ENCODE measurements at regions of chr1 and their contacts with region 1.

Region 1: GRCh38 chr1:237386362-237387143 is 344.6 kb downstream of the RYR2 start:
- DNase-seq: peak; percentile 9
- H3K4me3 ChIP-seq: no peak overlapping the region
- H3K27ac ChIP-seq: no peak overlapping the region
- H3K4me1 ChIP-seq: no peaks in the 10 kb centered on the region
- H3K27me3 ChIP-seq: no peaks in the 10 kb centered on the region
- CTCF ChIP-seq: peak; percentile 24 to 25
- POLR2A ChIP-seq: no peak

Region 2: GRCh38 chr1:236868625-236869467 is 517.7 kb before region 1 on chr1:
- CTCF ChIA-PET with region 1: interaction called, 5 read pairs
- POLR2A ChIA-PET with region 1: no interaction called
- dilution Hi-C with region 1: no loop called
- intact Hi-C with region 1: loop called (anchors 1 kb)
- DNase-seq: peak; percentile 69
- H3K4me3 ChIP-seq: no peak overlapping the region
- H3K27ac ChIP-seq: no peak overlapping the region
- H3K4me1 ChIP-seq: no peaks in the 10 kb centered on the region
- H3K27me3 ChIP-seq: no peaks in the 10 kb centered on the region
- CTCF ChIP-seq: peak; percentile 85 to 97
- POLR2A ChIP-seq: no peak

Region 3: GRCh38 chr1:236904874-236905741 is 481.4 kb before region 1 on chr1:
- CTCF ChIA-PET with region 1: no interaction called
- POLR2A ChIA-PET with region 1: no interaction called
- dilution Hi-C with region 1: no loop called
- intact Hi-C with region 1: loop called (anchors 10 kb)
- DNase-seq: peak; percentile 7
- H3K4me3 ChIP-seq: no peak overlapping the region
- H3K27ac ChIP-seq: no peak overlapping the region
- H3K4me1 ChIP-seq: no peaks in the 10 kb centered on the region
- H3K27me3 ChIP-seq: no peaks in the 10 kb centered on the region
- CTCF ChIP-seq: no peak
- POLR2A ChIP-seq: no peak

Region 4: GRCh38 chr1:237041795-237042525 is 344.6 kb before region 1 on chr1 and contains the start of gene RYR2:
- CTCF ChIA-PET with region 1: interaction called, 8 read pairs
- POLR2A ChIA-PET with region 1: no interaction called
- dilution Hi-C with region 1: no loop called
- intact Hi-C with region 1: loop called (anchors 10 kb)
- DNase-seq: no peak
- H3K4me3 ChIP-seq: no peak within 1 kb of the TSS
- H3K27ac ChIP-seq: no peak within 1 kb of the TSS
- H3K4me1 ChIP-seq: no peaks in the 10 kb centered on the region
- H3K27me3 ChIP-seq: peaks cover 5 to 23% of the 10 kb centered on the region in 2 experiments
- CTCF ChIP-seq: no peak
- POLR2A ChIP-seq: no peak
- total RNA-seq, gene RYR2: not detected in 2 replicates